Activated T-helper 1 cell treated with anti-CD3 and anti-CD28 coated beads, Interleukin-12 subunit alpha, Interleukin-12 subunit beta, Interleukin-2, Interleukin-4 antibody, amounts not matched to agents 30 ng/mL and 10 ng/mL and 1 ng/mL, durations not matched to agents 14 hours and 24 hours and 36 hours (primary cell): ENCODE measurements at regions of chr22 and their contacts with region 1.

Region 1: DNA sequence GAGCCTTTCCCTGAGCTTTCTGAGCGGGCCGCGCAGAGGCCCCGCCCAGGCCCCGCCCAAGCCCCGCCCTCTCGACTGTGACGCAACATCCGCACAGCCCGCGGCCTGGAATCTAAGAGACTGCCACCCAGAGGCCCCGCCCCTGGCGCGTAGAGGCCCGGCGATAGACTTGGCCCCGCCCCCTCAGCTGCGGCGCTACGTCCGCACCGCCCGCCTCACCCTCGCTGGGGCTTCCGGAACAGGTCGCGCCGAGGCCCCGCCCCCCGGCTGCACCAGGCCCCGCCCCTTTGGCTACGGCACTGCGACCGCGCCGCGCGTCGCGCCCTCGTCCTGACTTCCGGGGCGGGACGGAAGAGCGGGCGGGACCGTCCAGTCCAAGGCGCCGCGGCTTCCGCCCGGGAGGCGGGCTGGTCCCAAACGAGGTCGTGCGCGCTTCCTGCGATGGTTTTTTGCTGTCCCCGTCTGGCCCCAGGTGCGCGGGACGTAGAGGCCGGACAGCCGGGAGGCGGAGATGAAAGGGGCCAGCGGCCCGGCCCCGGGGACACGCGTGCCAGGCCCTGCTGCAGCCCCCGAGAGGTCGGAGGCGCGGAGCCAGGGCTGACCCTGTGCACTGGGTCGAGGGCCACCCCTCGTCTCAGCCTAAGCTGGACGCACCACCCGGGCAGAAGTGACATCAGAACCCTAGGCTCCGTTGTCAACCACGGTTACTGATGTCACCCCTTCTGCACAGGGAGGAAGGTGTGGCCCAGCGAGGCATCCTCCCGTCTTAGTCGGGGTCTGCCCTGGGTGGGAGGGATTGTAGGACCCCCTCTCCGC is 59.0 kb upstream of the WNT7B start:
- DNase-seq: peak; percentile 99
- H3K4me3 Mint-ChIP-seq: peak overlapping the region; percentile 84
- H3K27ac Mint-ChIP-seq: peak overlapping the region; percentile 76
- H3K4me1 Mint-ChIP-seq: peaks cover 19% of the 10 kb centered on the region
- H3K27me3 Mint-ChIP-seq: no peaks in the 10 kb centered on the region

Region 2: DNA sequence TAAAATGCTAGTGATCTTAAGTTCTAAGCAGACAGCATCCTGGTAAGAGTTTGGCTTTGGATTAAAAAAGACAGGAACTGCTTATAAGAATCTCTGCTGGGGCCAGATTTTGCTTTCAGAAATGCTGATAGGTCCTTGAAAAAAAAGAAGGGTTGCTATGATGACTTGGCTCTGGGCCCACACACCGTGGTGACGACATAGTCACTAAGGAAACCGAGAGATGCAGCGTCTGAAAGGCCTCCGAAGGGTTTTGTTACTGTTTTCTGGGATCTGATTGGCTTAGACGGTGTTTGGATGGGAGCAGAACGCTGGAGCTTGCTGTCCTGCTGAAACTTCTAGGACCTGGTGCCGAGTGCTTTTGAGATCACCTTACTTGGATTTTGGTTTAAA is 717.8 kb before region 1 on chr22:
- intact Hi-C with region 1: loop called (anchors 5 kb)
- DNase-seq: peak; percentile 83
- H3K4me3 Mint-ChIP-seq: peak overlapping the region; percentile 79
- H3K27ac Mint-ChIP-seq: peak overlapping the region; percentile 97
- H3K4me1 Mint-ChIP-seq: peaks cover 69% of the 10 kb centered on the region
- H3K27me3 Mint-ChIP-seq: no peaks in the 10 kb centered on the region

Region 3: GRCh38 chr22:46057762-46058420 is 21.9 kb after region 1 on chr22:
- intact Hi-C with region 1: loop called (anchors 1 kb)
- DNase-seq: peak; percentile 44
- H3K4me3 Mint-ChIP-seq: peak overlapping the region; percentile 34
- H3K27ac Mint-ChIP-seq: peak overlapping the region; percentile 76
- H3K4me1 Mint-ChIP-seq: peaks cover 49% of the 10 kb centered on the region
- H3K27me3 Mint-ChIP-seq: no peaks in the 10 kb centered on the region

Region 4: DNA sequence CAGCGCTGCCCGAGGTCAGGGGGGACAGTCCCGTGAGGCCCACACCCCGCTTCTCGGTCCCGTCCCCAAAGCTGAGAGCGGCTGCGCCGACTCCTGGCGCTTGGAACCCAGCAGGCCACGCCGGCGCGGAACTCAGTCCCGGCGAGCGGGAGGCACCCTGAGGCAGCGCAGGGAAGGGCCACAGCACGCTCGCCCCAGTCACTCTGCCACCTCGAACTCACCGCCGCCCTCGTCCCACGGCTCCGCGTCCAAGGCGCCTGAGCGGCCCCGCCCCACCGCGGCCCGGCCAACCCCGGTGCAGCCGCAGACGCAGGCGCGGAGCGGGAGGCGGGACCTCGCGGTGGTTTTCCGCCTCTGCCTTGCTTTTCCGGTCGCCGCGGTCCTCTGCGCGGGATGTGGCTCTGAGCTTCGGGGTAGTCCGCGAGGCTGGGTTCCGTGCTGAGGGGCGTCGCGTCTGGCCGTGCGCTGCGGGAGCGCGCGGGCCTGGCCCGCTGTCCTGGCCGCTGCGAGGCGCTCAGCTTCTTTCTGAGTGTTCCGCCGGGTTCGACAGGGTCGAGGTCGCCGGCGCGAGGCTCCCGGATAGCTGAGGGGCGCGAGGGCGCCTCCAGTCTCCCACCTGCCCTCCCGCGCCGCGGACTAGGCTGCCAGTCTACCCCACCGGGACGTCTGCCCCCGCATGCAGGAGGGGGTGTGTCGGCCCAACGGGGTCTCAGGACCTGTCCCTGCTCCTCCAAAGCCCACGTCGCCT is 214.3 kb after region 1 on chr22 and contains the start of gene CDPF1:
- intact Hi-C with region 1: loop called (anchors 10 kb)
- DNase-seq: peak; percentile 93
- H3K4me3 Mint-ChIP-seq: peak within 1 kb of the TSS; percentile 87
- H3K27ac Mint-ChIP-seq: peak within 1 kb of the TSS; percentile 74
- H3K4me1 Mint-ChIP-seq: peaks cover 31% of the 10 kb centered on the region
- H3K27me3 Mint-ChIP-seq: peaks cover 2% of the 10 kb centered on the region
- total RNA-seq, gene CDPF1: 9.5 and 14.2 TPM in 2 replicates

Region 5: GRCh38 chr22:46335201-46336118 is 299.5 kb after region 1 on chr22 and contains the start of gene TRMU:
- intact Hi-C with region 1: loop called (anchors 1 kb)
- DNase-seq: peak; percentile 74
- H3K4me3 Mint-ChIP-seq: peak within 1 kb of the TSS; percentile 95
- H3K27ac Mint-ChIP-seq: peak within 1 kb of the TSS; percentile 96
- H3K4me1 Mint-ChIP-seq: peaks cover 34% of the 10 kb centered on the region
- H3K27me3 Mint-ChIP-seq: no peaks in the 10 kb centered on the region
- total RNA-seq, gene TRMU: 81.0 and 85.5 TPM in 2 replicates